ENCODE measurements at regions of chr2 and their contacts with region 1.

Region 1: DNA sequence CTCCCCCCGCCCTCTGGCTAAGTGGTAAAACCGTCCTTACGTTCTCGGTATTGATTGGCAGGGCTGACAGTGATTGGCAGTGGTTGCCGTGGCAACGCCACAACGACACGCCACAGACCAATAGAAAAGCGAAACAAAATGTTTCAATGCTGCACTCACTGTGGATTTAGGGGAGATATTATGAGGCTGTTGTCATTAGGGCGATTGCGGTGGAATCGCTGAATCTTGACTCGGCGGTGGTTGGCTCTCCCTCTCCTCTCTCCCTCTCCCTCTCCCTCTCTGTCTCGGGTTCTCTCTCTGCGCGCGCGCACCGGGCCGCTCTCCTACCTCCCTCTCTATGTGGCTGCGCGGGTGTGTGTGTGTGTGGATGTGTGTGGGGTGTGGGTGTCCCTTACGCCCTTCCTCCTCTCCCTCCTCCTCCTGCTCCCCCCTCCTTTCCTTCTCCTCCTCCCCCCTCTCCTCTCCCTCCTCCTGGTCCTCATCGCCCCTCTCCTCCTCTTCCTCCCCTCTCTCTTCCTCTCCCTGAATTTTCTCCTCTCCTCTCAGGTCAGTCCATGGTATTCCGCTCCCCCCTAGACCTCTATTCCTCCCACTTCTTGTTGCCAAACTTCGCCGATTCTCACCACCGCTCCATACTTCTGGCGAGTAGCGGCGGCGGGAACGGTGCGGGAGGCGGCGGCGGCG is at the start of gene SIX3:
- DNase-seq: peak; percentile 89
- H3K4me3 ChIP-seq: peak within 1 kb of the TSS; percentile 56 to 60
- H3K27ac ChIP-seq: peak within 1 kb of the TSS in 1 of 2 experiments; percentile 92; a peak in 2 of 4 replicates
- H3K4me1 ChIP-seq: peaks cover 0 to 42% of the 10 kb centered on the region in 2 experiments; a peak in 2 of 4 replicates
- H3K27me3 ChIP-seq: peaks cover 74% of the 10 kb centered on the region
- CTCF ChIP-seq: no peak
- EP300 ChIP-seq: peak in 1 of 2 experiments; percentile 21; a peak in 1 of 4 replicates
- RAD21 ChIP-seq: no peak
- polyA plus RNA-seq, gene SIX3: 0.58 and 0.67 TPM in 2 replicates

Region 2: GRCh38 chr2:44543773-44544725 is 397.6 kb before region 1 on chr2:
- CTCF ChIA-PET with region 1: interaction called, 12 read pairs
- POLR2A ChIA-PET with region 1: interaction called, 4 read pairs
- DNase-seq: peak; percentile 57
- H3K4me3 ChIP-seq: no peak overlapping the region
- H3K27ac ChIP-seq: peak overlapping the region in 1 of 2 experiments; percentile 79; a peak in 2 of 4 replicates
- H3K4me1 ChIP-seq: peaks cover 15 to 62% of the 10 kb centered on the region in 2 experiments
- H3K27me3 ChIP-seq: no peaks in the 10 kb centered on the region
- CTCF ChIP-seq: no peak
- EP300 ChIP-seq: peak in 1 of 2 experiments; percentile 86; a peak in 2 of 4 replicates
- RAD21 ChIP-seq: peak; percentile 36; the same call in 1 of the 2 replicates

Region 3: DNA sequence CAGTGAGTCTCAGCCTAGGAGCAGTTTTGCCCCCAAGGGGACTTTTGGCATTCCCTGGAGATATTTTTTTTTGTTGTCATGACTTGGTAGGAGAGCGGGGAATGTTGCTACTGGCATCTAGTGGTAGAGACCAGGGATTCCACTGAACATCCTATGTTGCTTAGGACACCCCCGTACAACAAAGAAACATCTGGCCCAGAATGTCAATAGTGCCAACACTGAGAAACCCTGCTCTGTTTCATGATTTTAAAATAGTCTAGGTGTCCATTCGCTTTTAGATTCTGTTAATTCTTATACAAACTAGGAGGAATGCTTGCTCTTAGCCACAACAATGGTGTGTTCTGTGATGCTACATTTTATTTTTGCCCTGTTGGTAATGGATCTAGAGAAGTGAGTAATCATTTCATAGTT is 226.0 kb before region 1 on chr2:
- CTCF ChIA-PET with region 1: interaction called, 17 read pairs
- POLR2A ChIA-PET with region 1: no interaction called
- DNase-seq: peak; percentile 46
- H3K4me3 ChIP-seq: no peak overlapping the region
- H3K27ac ChIP-seq: peak overlapping the region in 1 of 2 experiments; percentile 31; a peak in 2 of 4 replicates
- H3K4me1 ChIP-seq: peaks cover 0 to 22% of the 10 kb centered on the region in 2 experiments; a peak in 2 of 4 replicates
- H3K27me3 ChIP-seq: no peaks in the 10 kb centered on the region
- CTCF ChIP-seq: peak; percentile 63
- EP300 ChIP-seq: 0 out of 4 replicates have a peak, but pooled peaks of 1 of the 2 experiments have one; percentile 36
- RAD21 ChIP-seq: peak; percentile 95

Region 4: GRCh38 chr2:44770221-44771195 is 171.2 kb before region 1 on chr2:
- CTCF ChIA-PET with region 1: interaction called, 14 read pairs
- POLR2A ChIA-PET with region 1: interaction called, 16 read pairs
- DNase-seq: peak; percentile 64
- H3K4me3 ChIP-seq: no peak overlapping the region
- H3K27ac ChIP-seq: peak overlapping the region in 1 of 2 experiments; percentile 99; a peak in 2 of 4 replicates
- H3K4me1 ChIP-seq: peaks cover 0 to 91% of the 10 kb centered on the region in 2 experiments; a peak in 3 of 4 replicates
- H3K27me3 ChIP-seq: no peaks in the 10 kb centered on the region
- CTCF ChIP-seq: no peak; the same call in 1 of the 2 replicates
- EP300 ChIP-seq: no peak
- RAD21 ChIP-seq: peak; percentile 46

Region 5: GRCh38 chr2:44802777-44803424 is 138.8 kb before region 1 on chr2:
- CTCF ChIA-PET with region 1: no interaction called
- POLR2A ChIA-PET with region 1: no interaction called
- DNase-seq: no peak
- H3K4me3 ChIP-seq: no peak overlapping the region
- H3K27ac ChIP-seq: no peak overlapping the region
- H3K4me1 ChIP-seq: peaks cover 0 to 4% of the 10 kb centered on the region in 2 experiments; a peak in 1 of 4 replicates
- H3K27me3 ChIP-seq: peaks cover 10% of the 10 kb centered on the region
- CTCF ChIP-seq: no peak
- EP300 ChIP-seq: no peak
- RAD21 ChIP-seq: no peak

Region 6: GRCh38 chr2:45083157-45083556 is 141.5 kb after region 1 on chr2:
- CTCF ChIA-PET with region 1: no interaction called
- POLR2A ChIA-PET with region 1: no interaction called
- DNase-seq: no peak
- H3K4me3 ChIP-seq: no peak overlapping the region
- H3K27ac ChIP-seq: no peak overlapping the region
- H3K4me1 ChIP-seq: peaks cover 0 to 5% of the 10 kb centered on the region in 2 experiments; a peak in 2 of 4 replicates
- H3K27me3 ChIP-seq: no peaks in the 10 kb centered on the region
- CTCF ChIP-seq: no peak
- EP300 ChIP-seq: no peak
- RAD21 ChIP-seq: peak; percentile 26; the same call in 1 of the 2 replicates

Measured in SK-N-SH (cell line).